Breast epithelium (tissue), 4 donors: ENCODE measurements at regions of chr12 and their contacts with region 1.

Region 1: DNA sequence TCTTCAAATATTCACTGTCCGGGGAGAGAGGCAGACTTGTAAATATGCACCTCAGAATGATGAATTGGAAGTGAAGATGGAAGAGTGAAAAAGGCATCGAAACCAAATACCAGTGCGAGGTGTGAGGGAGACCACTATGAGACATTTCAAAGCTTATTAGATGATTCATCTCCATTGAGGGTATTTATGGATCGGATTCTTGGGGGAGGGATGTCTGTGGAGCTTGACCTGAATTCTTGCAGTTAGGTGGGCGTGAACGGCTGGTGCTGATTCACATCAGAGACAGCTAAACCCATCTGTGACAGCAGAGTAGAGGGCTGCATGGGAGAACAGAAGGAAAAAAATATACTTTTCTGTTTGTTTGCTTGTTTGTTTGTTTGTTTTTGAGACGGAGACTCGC is 677.2 kb downstream of the AACS start:
- DNase-seq: no peak
- H3K4me3 ChIP-seq: no peak overlapping the region
- H3K27ac ChIP-seq: no peak overlapping the region
- H3K4me1 ChIP-seq: no peaks in the 10 kb centered on the region
- H3K27me3 ChIP-seq: no peaks in the 10 kb centered on the region
- CTCF ChIP-seq: no peak
- POLR2A ChIP-seq: no peak

Region 2: GRCh38 chr12:125657681-125658080 is 84.7 kb before region 1 on chr12:
- intact Hi-C with region 1: no loop called
- DNase-seq: no peak
- H3K4me3 ChIP-seq: no peak overlapping the region
- H3K27ac ChIP-seq: no peak overlapping the region
- H3K4me1 ChIP-seq: no peaks in the 10 kb centered on the region
- H3K27me3 ChIP-seq: no peaks in the 10 kb centered on the region
- CTCF ChIP-seq: no peak
- POLR2A ChIP-seq: no peak

Region 3: DNA sequence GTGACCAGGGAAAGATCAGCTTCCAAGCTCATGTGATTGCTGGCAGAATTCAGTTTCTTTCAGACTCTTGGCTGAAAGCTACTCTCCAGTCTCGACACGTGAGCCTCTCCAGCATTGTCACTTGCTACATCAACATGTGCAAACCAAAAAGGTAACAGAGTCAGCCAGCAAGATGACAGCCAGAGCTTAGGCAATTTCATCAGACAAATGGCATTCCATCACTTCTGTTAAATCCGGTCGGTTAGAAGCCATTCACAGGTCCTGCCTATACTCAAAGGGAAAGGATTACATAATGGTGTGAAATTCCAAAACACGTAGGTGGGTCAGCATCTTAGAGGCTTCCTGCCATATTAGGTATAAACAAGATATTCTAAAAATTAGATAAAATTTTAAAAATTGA is 23.7 kb after region 1 on chr12:
- intact Hi-C with region 1: no loop called
- DNase-seq: no peak
- H3K4me3 ChIP-seq: no peak overlapping the region
- H3K27ac ChIP-seq: no peak overlapping the region
- H3K4me1 ChIP-seq: no peaks in the 10 kb centered on the region
- H3K27me3 ChIP-seq: no peaks in the 10 kb centered on the region
- CTCF ChIP-seq: no peak
- POLR2A ChIP-seq: no peak

Region 4: GRCh38 chr12:125852166-125852565 is 109.8 kb after region 1 on chr12:
- intact Hi-C with region 1: loop called (anchors 5 kb)
- DNase-seq: no peak
- H3K4me3 ChIP-seq: no peak overlapping the region
- H3K27ac ChIP-seq: no peak overlapping the region
- H3K4me1 ChIP-seq: no peaks in the 10 kb centered on the region
- H3K27me3 ChIP-seq: no peaks in the 10 kb centered on the region
- CTCF ChIP-seq: no peak
- POLR2A ChIP-seq: no peak

Region 5: GRCh38 chr12:126117502-126117901 is 375.1 kb after region 1 on chr12:
- intact Hi-C with region 1: no loop called
- DNase-seq: no peak
- H3K4me3 ChIP-seq: no peak overlapping the region
- H3K27ac ChIP-seq: no peak overlapping the region
- H3K4me1 ChIP-seq: no peaks in the 10 kb centered on the region
- H3K27me3 ChIP-seq: no peaks in the 10 kb centered on the region
- CTCF ChIP-seq: no peak
- POLR2A ChIP-seq: no peak